HepG2 (cell line): ENCODE measurements at regions of chr7 and their contacts with region 1.

Region 1: DNA sequence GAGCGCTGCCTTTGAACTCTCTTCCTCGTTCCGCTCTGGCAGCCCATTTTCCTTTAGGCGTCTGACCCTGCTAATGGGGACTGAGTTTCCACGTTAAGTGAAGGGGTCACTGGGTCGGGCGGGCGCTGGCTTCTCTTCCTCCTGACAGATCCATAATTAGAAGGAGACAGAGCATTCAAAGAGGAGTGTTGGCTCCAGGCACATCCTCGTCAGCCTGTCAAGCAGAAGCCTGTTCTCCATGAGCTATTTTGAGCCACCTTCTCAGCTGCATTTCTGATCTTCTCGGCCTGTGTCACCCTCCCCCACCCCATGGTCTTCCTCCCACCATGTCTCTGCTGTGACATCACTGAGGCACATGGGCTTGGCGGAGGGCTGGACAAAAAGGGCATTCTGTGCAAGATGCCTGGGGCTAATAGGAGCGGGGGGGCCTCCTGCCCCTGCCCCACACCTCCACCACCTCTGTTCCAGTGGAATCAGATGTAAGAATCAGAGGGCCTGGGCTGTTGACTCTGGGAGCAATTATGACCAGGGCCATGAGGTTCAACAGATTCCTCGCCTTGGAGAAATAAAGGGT is 248.1 kb downstream of the PLXNA4 start:
- DNase-seq: no peak
- ATAC-seq: no peak
- H3K4me3 ChIP-seq: no peak overlapping the region
- H3K27ac ChIP-seq: no peak overlapping the region
- H3K4me1 ChIP-seq: no peaks in the 10 kb centered on the region
- H3K27me3 ChIP-seq: peaks cover 1 to 32% of the 10 kb centered on the region in 2 experiments; a peak in 3 of 5 replicates
- CTCF ChIP-seq: no peak
- EP300 ChIP-seq: no peak
- POLR2A ChIP-seq: no peak
- RAD21 ChIP-seq: no peak

Region 2: DNA sequence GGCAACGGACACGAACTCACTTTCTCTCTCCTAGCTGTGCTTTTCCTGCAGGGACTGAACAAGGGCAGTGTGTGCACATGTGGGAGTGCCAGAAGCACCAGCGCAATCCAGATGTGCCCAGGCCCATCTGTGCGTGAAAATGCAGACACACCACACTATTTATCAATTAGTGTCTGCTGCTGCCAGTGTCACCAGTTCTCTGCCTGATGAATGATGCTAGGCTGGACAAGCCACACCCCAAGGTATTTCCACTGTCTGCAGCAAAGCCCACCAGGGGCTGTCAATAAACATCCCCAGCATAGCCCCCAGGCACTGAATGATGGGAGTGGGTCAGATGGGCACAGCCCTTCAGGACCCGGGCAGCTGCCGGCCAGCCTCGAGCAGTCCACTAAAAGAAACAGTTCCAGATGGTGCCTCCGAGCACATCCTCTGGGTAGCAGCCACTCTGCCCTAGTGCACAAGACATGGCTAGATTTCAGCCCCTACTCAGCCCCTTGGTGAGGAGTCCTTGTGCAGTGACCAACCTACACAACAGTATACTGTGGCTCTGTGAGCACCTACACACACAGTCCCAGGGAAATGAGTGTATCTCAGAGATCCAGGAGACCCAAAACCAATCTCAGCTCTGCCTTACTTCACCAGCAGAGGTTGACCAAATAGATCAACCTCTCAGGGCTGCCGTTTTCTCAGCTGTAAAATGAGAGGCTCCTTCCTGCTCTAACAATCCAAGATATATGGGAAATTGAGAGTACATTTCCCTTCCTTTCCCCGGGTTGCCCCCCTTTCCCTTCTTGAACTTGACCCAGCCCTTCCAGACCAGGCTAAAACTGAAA is 66.6 kb before region 1 on chr7:
- CTCF ChIA-PET with region 1: no interaction called
- POLR2A ChIA-PET with region 1: no interaction called
- in situ Hi-C with region 1: no loop called
- intact Hi-C with region 1: no loop called
- DNase-seq: no peak
- ATAC-seq: no peak
- H3K4me3 ChIP-seq: no peak overlapping the region
- H3K27ac ChIP-seq: no peak overlapping the region
- H3K4me1 ChIP-seq: peaks cover 6% of the 10 kb centered on the region
- H3K27me3 ChIP-seq: peaks cover 0 to 14% of the 10 kb centered on the region in 2 experiments; a peak in 1 of 5 replicates
- CTCF ChIP-seq: no peak
- EP300 ChIP-seq: no peak
- POLR2A ChIP-seq: no peak
- RAD21 ChIP-seq: no peak

Region 3: GRCh38 chr7:132569884-132570614 is 241.9 kb after region 1 on chr7:
- CTCF ChIA-PET with region 1: no interaction called
- POLR2A ChIA-PET with region 1: no interaction called
- in situ Hi-C with region 1: loop called (anchors 5 kb)
- intact Hi-C with region 1: no loop called
- DNase-seq: no peak
- ATAC-seq: no peak
- H3K4me3 ChIP-seq: no peak overlapping the region
- H3K27ac ChIP-seq: no peak overlapping the region
- H3K4me1 ChIP-seq: no peaks in the 10 kb centered on the region
- H3K27me3 ChIP-seq: peaks cover 0 to 52% of the 10 kb centered on the region in 2 experiments; a peak in 3 of 5 replicates
- CTCF ChIP-seq: no peak
- EP300 ChIP-seq: no peak
- POLR2A ChIP-seq: no peak
- RAD21 ChIP-seq: no peak